GM10248 (cell line): ENCODE measurements at regions of chr3 and their contacts with region 1.

Region 1: GRCh38 chr3:107973152-107973551 is 117.7 kb downstream of the CD47 start:
- DNase-seq: no peak
- CTCF ChIP-seq: no peak

Region 2: GRCh38 chr3:107910713-107911259 is 62.4 kb before region 1 on chr3:
- CTCF ChIA-PET with region 1: no interaction called
- POLR2A ChIA-PET with region 1: no interaction called
- DNase-seq: peak; percentile 60
- CTCF ChIP-seq: no peak

Region 3: DNA sequence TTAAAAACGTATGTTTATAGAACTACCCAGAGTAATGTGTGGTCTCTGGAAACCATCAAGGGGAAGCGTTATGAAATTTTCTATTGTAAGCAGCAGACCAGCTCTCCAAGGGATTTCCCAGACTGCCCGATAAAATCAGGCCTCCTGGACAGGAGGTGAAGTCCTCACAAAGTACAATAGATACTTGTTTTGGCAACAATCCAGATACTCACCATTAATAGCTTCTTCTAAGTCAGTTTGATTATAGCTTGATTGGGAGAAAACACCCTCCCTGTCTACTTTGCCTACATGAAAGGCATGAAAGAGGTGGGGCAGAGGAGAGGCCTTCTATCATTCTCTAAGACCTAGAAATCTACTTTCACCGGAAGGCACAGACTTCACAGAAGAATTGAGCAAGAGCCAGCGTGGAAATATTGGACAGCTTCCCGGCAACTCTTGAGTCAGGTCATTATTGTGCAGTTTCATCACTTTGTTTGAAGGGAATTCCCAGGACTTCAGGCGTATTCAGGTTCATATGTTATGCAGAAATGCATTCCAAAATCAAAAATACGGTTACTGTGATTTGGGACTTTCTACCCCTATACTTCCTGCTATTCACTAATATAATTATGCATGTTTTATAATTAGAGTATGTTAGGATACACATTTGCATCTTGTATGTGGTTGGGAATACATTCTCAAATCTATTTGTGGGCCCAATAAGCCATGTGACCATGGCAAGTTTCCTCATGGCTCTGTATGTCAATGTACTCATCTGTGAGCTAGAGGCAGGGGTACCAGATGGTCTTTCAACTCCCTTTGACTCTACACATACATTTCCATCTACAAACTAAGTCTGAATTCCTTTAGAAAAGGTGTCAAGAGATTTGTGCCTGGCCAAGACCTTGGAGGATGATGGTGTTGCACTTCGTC is 14.1 kb after region 1 on chr3:
- CTCF ChIA-PET with region 1: interaction called, 17 read pairs
- POLR2A ChIA-PET with region 1: no interaction called
- DNase-seq: no peak
- CTCF ChIP-seq: no peak

Region 4: GRCh38 chr3:108001455-108001854 is 28.3 kb after region 1 on chr3:
- CTCF ChIA-PET with region 1: no interaction called
- POLR2A ChIA-PET with region 1: no interaction called
- DNase-seq: no peak
- CTCF ChIP-seq: no peak